ENCODE measurements at regions of chr14 and their contacts with region 1.

Region 1: DNA sequence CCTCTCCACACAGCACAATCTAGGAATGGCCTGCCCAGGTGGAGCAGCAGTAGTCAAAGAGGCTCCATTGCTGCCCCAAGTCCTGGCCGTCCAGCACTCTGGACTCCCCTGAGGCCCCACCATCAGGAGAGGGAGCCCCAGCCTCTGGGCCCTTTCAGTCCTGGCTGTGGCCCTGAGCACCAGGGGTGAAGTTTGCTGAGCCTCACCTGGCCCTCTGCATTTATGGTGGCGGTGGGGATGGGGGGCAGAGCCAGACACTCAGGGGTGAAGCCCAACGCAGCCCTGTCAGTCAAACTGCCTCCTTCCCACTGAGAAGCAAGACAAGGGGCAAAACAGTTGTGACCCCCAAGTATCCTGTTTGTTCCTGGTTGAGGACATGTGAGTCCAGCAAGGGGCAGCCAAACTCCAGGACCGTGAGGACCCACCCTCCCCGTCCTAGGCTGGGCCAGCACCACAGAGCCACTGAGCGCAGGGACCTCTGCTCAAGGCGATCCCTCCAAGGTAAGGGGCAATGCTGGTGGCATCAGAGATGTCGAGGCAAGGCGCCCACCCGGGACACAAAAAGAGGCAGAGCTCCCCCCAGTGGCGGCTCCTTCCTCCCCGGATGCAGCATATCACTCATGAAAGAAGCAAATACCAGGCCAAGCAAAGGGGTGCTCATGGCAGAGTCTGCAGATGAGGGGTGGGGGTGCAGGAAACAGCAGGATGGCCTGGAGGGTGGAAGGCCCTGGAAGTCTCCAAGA is 4.8 kb upstream of the AMN start:
- DNase-seq: peak; percentile 85
- H3K4me3 Mint-ChIP-seq: no peak overlapping the region
- H3K27ac Mint-ChIP-seq: no peak overlapping the region
- H3K4me1 Mint-ChIP-seq: no peaks in the 10 kb centered on the region
- H3K27me3 Mint-ChIP-seq: no peaks in the 10 kb centered on the region

Region 2: DNA sequence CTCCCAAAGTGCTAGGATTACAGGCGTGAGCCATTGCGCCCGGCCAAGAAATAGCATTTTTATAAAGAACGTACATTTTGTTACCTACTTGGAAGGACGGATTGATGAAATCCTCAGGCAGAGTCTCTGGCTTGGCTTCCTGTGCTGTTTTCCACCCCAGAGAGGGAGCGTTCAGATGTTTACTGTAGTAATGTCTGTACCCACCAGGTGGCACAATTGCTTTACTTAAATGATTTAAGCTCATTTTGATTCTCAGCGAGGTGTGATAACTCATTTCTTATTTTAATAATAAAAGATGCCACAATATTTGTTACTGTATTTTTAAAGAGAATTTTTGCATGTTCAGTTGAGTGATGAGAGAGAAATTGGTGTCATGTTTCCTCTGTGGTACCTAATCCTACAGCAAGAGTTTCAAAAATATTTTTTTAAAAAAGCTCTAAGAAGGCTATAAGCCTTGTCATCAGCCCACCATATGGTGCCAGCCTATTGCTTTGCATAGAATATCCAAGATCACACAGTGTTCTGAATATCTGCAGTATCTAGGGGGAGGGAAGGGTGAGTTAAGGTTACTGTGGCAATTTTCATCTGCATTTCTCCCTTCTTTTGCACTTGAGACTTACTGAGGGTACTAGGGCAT is 223.0 kb before region 1 on chr14:
- intact Hi-C with region 1: loop called (anchors 1 kb)
- DNase-seq: peak; percentile 89
- H3K4me3 Mint-ChIP-seq: no peak overlapping the region
- H3K27ac Mint-ChIP-seq: no peak overlapping the region
- H3K4me1 Mint-ChIP-seq: peaks cover 17% of the 10 kb centered on the region
- H3K27me3 Mint-ChIP-seq: no peaks in the 10 kb centered on the region

Region 3: DNA sequence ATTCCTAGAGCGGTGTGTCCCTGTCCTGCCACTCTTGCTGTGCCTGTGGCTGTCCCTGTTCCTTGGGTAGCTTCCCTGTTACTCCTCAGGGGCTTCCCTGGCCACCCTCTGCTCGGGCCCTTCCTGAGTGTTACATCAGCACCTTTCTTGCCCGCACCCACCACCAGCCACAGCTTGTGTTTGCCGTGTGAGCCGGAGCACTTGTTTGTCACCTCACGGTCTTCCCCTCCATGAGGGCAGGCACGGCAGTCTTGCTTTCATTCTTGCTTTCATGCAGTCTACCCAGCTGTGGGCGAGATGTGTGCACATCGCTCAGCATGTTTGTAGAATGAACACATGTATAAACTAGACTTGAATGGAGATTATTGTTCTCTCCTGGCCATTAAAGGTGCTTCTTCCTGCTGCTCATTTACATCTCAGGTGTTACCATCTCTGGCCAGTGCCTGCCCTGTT is 98.4 kb before region 1 on chr14:
- intact Hi-C with region 1: no loop called
- DNase-seq: peak; percentile 90
- H3K4me3 Mint-ChIP-seq: peak overlapping the region; percentile 83
- H3K27ac Mint-ChIP-seq: peak overlapping the region; percentile 94
- H3K4me1 Mint-ChIP-seq: peaks cover 70% of the 10 kb centered on the region
- H3K27me3 Mint-ChIP-seq: no peaks in the 10 kb centered on the region

Region 4: DNA sequence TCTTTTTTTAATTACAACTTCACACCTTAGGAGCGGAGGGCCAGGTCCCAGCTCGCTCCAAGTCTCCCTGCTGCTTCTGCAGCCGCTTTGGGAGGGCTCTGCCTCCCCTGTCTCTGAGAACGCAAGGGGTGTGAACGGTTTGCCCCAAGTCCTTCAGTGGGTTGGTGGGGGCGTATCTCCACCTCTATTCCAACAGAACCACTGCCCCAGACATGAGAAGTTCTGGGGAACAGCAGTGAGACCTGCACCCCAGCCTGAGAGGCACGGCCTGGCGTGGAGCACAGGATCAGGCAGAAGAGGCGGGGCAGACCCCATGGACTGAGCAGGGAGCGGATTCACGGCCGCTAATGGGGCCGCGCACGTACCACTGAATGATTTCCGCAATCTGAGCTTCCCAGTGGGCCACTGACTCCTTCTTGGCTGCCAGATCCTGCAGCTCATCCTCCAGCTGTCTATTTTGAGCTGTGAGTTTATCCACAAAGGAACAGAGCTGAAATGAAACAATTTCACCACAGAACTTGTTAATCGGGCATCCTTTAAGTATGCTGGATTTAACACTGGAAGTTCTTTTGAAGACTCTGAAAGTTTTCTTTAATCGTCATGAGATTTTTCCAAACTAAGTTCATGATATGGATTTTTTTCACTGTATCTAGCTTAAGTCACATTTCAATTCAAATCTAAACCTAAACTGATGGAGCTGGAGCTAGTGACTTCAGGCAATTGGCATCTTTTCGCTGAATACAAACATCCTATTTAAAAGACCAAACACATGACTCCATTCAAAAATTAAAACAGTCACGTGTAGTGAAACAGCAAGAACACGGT is 49.3 kb after region 1 on chr14:
- intact Hi-C with region 1: no loop called
- DNase-seq: no peak
- H3K4me3 Mint-ChIP-seq: no peak overlapping the region
- H3K27ac Mint-ChIP-seq: no peak overlapping the region
- H3K4me1 Mint-ChIP-seq: no peaks in the 10 kb centered on the region
- H3K27me3 Mint-ChIP-seq: no peaks in the 10 kb centered on the region

Measured in activated CD4-positive, alpha-beta T cell treated with anti-CD3 and anti-CD28 coated beads, Interleukin-2, amount 10 ng/mL, durations not matched to agents 24 days and 14 days (primary cell).